Right ventricle myocardium superior (tissue), 1 donor: ENCODE measurements at regions of chr11 and their contacts with region 1.

Region 1: GRCh38 chr11:27472398-27473016 is at the start of gene LGR4:
- DNase-seq: peak; percentile 96
- ATAC-seq: peak; percentile 94
- total RNA-seq, gene LGR4: 24.2 TPM

Region 2: DNA sequence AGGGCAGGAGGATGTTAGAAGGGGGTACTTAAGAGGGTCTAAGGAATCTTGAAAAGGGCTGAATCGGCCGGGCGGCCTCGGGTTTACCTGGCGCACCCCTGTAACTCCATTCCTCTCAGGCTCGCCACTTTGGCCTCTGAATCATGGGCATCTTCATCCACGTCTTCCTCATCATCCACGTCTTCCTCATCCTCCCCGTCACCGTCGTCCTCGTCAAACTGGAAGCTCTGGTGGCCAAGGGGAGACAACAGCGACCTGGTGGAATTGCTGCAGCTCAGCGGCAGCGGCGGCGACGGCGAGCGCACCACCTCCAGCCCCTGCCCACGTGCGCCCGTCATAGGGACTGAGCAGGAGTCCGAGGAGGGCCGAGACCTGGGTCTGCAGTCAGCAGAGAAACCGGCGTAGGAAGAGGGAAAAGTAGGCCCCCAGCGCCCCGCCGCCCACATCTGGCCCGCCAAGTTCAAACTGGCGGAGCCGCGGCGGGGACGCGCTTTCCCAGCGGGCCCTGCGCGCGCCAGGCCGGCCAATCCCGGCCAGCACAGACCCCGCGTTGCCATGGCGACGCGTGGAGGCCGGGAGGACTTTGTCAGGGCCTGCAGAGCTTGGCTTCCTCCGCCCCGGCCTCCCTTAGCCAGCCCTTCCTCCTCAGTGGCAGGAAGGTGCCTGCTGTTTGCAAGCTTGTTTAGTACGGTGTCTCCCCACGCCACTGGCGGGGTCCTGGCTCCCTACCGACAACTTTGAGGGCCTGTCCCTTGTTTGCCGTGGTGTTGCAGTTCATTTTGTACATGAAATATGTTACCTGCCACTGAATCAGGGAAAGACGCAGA is 109.5 kb before region 1 on chr11 and contains the start of gene CCDC34:
- intact Hi-C with region 1: loop called (anchors 10 kb)
- DNase-seq: peak; percentile 94
- ATAC-seq: peak; percentile 99
- total RNA-seq, gene CCDC34: 3.6 TPM

Region 3: DNA sequence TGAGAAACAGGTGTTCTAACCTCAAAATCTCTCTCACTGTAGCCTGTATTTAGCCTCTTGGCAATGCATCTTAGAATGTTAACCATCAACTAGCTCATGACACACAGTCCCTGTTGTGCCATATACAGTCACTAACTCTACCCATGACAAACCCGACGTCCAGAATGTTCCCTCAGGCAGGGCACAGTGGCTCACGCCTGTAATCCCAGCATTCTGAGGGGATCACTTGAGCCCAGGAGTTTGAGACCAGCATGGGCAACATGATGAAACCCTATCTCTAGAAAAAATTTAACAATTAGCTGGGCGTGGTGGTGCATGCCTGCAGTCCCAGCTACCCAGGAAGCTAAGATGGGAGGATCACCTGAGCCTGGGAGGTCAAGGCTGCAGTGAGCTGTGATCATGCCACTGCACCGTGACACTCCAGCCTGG is 91.3 kb before region 1 on chr11:
- intact Hi-C with region 1: no loop called
- DNase-seq: no peak
- ATAC-seq: no peak

Region 4: GRCh38 chr11:27392278-27393114 is 80.0 kb before region 1 on chr11:
- intact Hi-C with region 1: loop called (anchors 10 kb)
- DNase-seq: no peak
- ATAC-seq: peak; percentile 66